ENCODE measurements at regions of chr18 and their contacts with region 1.

Region 1: DNA sequence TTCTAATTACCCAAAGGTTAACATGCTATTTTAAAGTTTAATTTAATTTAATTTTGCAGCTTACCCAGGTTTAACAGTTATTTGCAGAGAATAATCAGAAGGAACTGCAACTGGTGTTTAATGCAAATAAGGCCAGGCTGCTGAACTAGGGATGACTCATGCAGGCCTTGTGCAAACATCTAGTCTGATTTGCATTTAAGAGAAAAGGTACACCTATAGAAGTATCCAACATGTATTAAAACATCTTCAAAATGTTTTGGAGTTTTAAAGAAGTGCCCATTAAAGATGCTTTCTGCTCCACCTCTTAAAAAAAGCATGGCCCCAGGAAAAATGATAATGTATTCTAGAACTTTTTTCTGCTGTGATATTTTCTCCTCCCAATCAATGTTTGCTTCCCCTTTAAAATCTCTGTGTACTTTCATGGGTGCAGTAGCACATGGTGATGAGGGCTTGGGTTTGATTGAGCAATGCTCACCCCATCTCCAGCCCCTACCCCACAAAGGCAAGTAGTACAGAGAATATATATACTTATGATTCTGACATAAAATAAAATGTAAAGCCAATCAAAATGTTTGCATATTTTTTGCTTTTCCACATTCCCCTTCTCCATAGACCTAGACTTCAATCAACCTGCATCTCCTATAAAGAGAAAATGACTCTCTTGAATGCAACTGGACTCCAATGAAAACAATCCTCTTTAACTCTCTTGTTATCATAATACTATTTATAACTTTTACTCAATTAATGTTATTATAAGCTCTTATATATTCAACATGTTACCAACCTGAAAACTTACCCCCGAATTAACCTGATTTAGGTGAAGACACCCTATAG is 54.1 kb downstream of the ATP8B1 start:
- DNase-seq: peak; percentile 76
- ATAC-seq: peak; percentile 76
- H3K4me3 ChIP-seq: no peak overlapping the region
- H3K27ac ChIP-seq: peak overlapping the region; percentile 52
- H3K4me1 ChIP-seq: peaks cover 36% of the 10 kb centered on the region
- H3K27me3 ChIP-seq: no peaks in the 10 kb centered on the region
- CTCF ChIP-seq: no peak

Region 2: DNA sequence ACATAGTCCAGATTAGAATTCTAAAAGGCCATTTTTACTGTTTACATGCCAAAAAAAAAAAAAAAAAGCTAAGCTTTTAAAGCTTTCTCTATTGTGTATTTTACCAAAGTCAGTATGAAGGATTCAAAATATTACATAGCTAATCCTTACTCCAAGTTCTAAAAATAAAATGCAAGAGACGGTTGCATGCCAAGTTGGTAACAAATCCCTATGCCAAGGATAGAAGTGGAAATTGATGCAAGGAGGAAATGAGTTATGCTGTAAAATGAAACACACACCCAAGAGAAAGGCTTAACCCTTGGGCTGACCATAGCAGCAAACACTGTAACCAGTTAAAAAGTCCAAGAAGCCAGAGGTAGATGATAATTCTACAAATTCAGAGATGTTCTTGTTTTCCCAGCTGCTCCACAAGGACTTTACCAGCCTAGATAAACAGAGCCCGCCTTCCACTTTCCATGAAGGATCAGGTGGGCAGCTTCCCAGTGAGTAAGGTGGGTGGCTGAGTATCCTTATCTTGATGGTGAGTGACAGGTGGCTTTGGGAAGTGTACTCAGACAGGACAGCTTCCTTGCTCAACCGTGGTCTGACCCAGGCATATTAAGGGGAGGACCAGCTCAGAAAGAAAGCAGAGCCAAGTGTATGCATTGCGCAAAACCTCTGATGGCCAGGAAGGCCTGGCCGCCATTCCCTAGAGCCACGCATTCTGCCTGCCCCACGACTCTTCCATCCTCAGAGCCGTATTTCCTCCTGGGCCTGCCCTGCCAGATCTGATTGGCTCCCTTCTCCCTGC is 19.7 kb after region 1 on chr18:
- CTCF ChIA-PET with region 1: interaction called, 3 read pairs
- POLR2A ChIA-PET with region 1: no interaction called
- intact Hi-C with region 1: loop called (anchors 2 kb)
- DNase-seq: peak; percentile 59
- ATAC-seq: peak; percentile 86
- H3K4me3 ChIP-seq: no peak overlapping the region
- H3K27ac ChIP-seq: peak overlapping the region; percentile 63
- H3K4me1 ChIP-seq: peaks cover 45% of the 10 kb centered on the region
- H3K27me3 ChIP-seq: no peaks in the 10 kb centered on the region
- CTCF ChIP-seq: no peak

Region 3: GRCh38 chr18:57789090-57789489 is 40.1 kb after region 1 on chr18:
- CTCF ChIA-PET with region 1: no interaction called
- POLR2A ChIA-PET with region 1: interaction called, 3 read pairs
- intact Hi-C with region 1: loop called (anchors 5 kb)
- DNase-seq: peak; percentile 93
- ATAC-seq: peak; percentile 65
- H3K4me3 ChIP-seq: peak overlapping the region; percentile 48
- H3K27ac ChIP-seq: peak overlapping the region; percentile 96
- H3K4me1 ChIP-seq: peaks cover 59% of the 10 kb centered on the region
- H3K27me3 ChIP-seq: no peaks in the 10 kb centered on the region
- CTCF ChIP-seq: no peak

Region 4: GRCh38 chr18:57803103-57803969 is 54.3 kb after region 1 on chr18 and contains the start of gene ATP8B1:
- CTCF ChIA-PET with region 1: no interaction called
- POLR2A ChIA-PET with region 1: no interaction called
- intact Hi-C with region 1: loop called (anchors 1 kb)
- DNase-seq: peak; percentile 96
- ATAC-seq: peak; percentile 75
- H3K4me3 ChIP-seq: peak within 1 kb of the TSS; percentile 79
- H3K27ac ChIP-seq: peak within 1 kb of the TSS; percentile 72
- H3K4me1 ChIP-seq: peaks cover 47% of the 10 kb centered on the region
- H3K27me3 ChIP-seq: no peaks in the 10 kb centered on the region
- CTCF ChIP-seq: no peak
- total RNA-seq, gene ATP8B1: 18.4 and 24.8 TPM in 2 replicates

Measured in PC-3 (cell line).